Transverse colon (tissue), 4 donors: ENCODE measurements at regions of chr19 and their contacts with region 1.

Region 1: DNA sequence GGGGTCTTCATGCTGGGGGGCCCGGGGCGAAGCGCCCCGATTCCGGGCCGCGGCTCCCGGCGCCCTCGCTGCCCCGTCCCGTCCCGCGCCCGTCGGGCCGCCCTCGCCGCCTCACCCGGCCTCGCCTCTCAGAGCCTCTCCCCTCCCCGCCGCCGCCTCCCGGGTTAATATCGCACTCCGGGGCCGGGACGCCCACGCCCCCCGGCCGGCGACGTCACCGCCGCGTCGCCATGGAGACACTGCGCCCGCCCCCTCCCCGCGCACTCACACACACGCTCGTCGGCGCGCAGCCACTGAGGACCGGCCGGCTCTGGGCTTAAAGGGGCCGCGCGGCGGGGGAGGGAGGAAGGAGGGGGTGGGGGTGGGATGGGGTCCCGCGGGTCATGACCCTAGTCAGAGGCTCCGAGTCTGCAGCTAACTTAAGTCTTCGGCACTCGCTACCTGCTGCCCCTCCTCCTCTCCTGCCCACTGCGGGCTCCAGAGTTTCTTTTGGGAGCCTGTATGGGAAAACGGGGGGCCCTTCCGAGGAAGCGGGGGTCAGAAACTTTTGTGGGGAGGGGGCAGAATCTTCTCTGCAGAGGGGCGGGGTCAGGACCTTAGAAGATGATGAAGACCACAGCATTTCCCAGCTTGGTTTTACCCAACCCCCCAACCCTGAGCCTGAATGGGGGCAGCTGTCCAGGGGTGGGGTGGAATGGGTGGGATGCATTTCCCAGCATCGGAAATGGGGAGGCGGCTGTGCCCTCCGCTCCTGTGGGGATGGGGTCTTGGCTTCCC is at the start of gene ERF:
- DNase-seq: peak; percentile 95
- H3K4me3 ChIP-seq: peak within 1 kb of the TSS; percentile 72 to 99 (median 90)
- H3K27ac ChIP-seq: peak within 1 kb of the TSS; percentile 97 to 100 (median 99)
- H3K4me1 ChIP-seq: peaks cover 27 to 53% (median 43%) of the 10 kb centered on the region in 4 donors
- H3K27me3 ChIP-seq: no peaks in the 10 kb centered on the region
- CTCF ChIP-seq: no peak
- EP300 ChIP-seq: no peak
- POLR2A ChIP-seq: peak; percentile 87
- total RNA-seq, gene ERF: 20.9 to 67.3 (median 30.5) TPM

Region 2: DNA sequence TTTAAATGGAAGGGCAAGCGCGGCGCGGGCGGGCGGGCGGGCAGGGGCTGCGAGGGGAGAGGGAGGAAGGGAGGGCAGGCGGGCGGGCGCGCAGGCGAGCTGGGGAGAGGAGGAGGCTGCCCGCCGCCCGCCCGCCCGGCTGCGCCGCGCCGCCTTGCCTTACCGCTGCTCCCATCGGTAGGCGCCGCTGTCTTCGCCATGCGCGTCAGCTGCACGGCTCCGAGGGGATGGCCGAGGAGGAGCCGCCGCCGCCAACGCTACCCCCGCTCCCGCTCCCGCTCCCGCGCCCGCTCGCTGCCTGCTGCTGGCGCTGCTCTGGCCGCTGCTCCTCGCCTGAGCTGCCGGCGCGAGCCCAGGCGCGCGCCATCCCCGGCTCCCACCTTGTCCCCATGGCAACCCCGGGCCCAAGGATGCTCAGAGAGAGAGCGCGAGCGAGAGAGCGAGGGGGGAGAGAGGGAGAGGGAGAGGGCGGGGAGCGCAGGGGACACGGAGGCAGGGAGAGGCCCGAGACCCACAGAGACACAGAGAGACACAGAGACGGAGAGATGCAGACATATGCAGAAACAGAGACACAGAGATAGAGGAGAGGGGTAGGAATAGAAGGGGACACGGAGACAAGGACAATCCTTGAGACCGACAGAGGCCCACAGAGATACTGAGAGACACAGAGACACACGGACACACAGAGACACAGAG is 78.0 kb before region 1 on chr19:
- in situ Hi-C with region 1: no loop called
- intact Hi-C with region 1: loop called (anchors 2 kb)
- DNase-seq: peak; percentile 66
- H3K4me3 ChIP-seq: peak overlapping the region in 3 of 4 donors; percentile 40 to 59 (median 42)
- H3K27ac ChIP-seq: no peak overlapping the region
- H3K4me1 ChIP-seq: peaks cover 6 to 19% (median 16%) of the 10 kb centered on the region in 4 donors
- H3K27me3 ChIP-seq: peaks cover 88% of the 10 kb centered on the region
- CTCF ChIP-seq: peak in 4 of 5 experiments; percentile 20 to 41 (median 28)
- EP300 ChIP-seq: no peak
- POLR2A ChIP-seq: no peak